ENCODE measurements at regions of chr16 and their contacts with region 1.

Region 1: DNA sequence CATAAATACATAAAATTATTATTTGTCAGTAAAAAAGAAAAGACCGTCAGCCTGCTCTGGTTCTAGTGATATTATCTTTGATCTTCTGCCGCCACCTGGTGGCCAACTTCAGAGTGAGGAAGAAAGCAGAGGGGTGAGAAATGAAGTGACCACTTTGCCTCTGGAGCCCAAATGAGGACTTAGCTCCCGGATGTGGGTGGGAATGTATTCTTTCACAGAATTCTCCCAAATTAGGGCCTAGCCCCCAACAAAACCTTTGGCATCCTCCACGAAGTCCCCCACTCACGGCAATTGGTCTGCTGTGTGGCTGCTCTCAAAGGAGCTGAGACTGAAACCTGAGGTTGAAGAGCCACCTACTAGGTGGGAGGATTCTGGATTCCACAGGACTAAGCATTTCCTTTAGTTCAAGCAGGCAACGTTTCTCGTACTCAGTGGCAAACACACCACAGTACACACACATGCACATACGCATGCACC is 4.9 kb upstream of the ZNF267 start:
- DNase-seq: peak; percentile 74 to 85 (median 78)
- H3K4me3 ChIP-seq: peak overlapping the region; percentile 65 to 67
- H3K4me3 Mint-ChIP-seq: peak overlapping the region; percentile 71 to 84 (median 78)
- H3K27ac ChIP-seq: peak overlapping the region; percentile 71
- H3K27ac Mint-ChIP-seq: peak overlapping the region; percentile 74 to 96 (median 92)
- H3K4me1 ChIP-seq: peaks cover 44% of the 10 kb centered on the region
- H3K4me1 Mint-ChIP-seq: peaks cover 31 to 50% (median 38%) of the 10 kb centered on the region in 4 donors
- H3K27me3 ChIP-seq: no peaks in the 10 kb centered on the region
- H3K27me3 Mint-ChIP-seq: no peaks in the 10 kb centered on the region

Region 2: GRCh38 chr16:30957456-30958174 is 911.1 kb before region 1 on chr16 and contains the start of gene SETD1A:
- CTCF ChIA-PET with region 1: interaction called, 11 read pairs
- POLR2A ChIA-PET with region 1: interaction called, 5 read pairs
- intact Hi-C with region 1: loop called (anchors 10 kb)
- DNase-seq: peak; percentile 97 to 98 (median 98)
- H3K4me3 ChIP-seq: peak within 1 kb of the TSS; percentile 85 to 95
- H3K4me3 Mint-ChIP-seq: peak within 1 kb of the TSS; percentile 95 to 99 (median 96)
- H3K27ac ChIP-seq: peak within 1 kb of the TSS; percentile 92
- H3K27ac Mint-ChIP-seq: peak within 1 kb of the TSS; percentile 98 to 100 (median 99)
- H3K4me1 ChIP-seq: peaks cover 30% of the 10 kb centered on the region
- H3K4me1 Mint-ChIP-seq: peaks cover 13 to 43% (median 31%) of the 10 kb centered on the region in 4 donors
- H3K27me3 ChIP-seq: no peaks in the 10 kb centered on the region
- H3K27me3 Mint-ChIP-seq: peaks cover 0 to 4% of the 10 kb centered on the region in 2 donors
- total RNA-seq, gene SETD1A: 32.1 to 33.2 TPM

Region 3: DNA sequence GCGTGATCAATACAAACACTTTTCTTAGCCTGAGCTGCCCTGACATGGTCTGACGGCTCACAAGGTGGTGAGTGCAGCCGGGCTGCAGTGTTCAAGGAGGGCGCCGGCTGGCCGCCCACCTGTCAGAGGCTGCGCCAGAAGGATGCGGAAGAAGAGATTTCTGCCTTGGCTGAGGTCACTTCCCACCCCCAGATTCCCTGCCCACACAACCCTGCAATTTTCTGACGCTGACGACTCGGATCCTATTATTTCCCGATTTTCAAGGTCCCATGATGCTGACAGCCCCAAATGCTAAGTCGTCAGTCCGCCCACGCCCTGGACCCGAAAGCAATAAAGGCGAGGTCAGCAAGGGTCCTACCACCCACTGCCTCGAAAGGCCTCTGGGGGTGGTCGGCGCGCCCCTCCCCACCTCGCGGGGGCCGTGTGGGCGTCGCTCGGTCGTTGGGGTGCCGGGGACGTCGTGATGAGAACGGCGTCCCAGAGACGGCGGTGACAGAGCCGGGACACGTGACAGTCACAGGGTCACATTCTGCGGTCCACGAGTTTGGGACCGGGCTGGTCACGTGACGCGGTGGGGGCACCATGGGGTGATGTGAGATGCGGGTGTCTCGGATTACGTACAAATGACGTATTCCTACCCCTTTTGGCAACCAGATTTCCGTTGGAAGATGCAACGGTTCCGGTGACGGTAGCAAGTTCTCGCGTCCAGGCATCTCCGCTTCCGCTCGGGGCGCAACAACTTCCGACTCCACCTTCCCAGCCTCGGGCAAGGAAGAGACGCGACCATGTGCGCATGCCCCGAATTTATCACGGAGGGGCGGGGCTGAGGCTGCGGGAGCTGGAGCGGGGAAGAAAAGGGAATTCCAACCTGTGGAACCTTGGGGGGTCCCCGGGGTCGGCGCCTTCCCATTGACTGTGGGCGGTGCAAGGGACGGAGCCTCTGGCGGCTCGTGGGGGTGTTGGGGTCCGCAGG is 835.7 kb before region 1 on chr16 and contains the start of gene STX4:
- CTCF ChIA-PET with region 1: no interaction called
- POLR2A ChIA-PET with region 1: no interaction called
- intact Hi-C with region 1: loop called (anchors 5 kb)
- DNase-seq: peak; percentile 95 to 100 (median 98)
- H3K4me3 ChIP-seq: peak within 1 kb of the TSS; percentile 83 to 97
- H3K4me3 Mint-ChIP-seq: peak within 1 kb of the TSS; percentile 91 to 98 (median 95)
- H3K27ac ChIP-seq: peak within 1 kb of the TSS; percentile 86
- H3K27ac Mint-ChIP-seq: peak within 1 kb of the TSS; percentile 93 to 98 (median 98)
- H3K4me1 ChIP-seq: peaks cover 24% of the 10 kb centered on the region
- H3K4me1 Mint-ChIP-seq: peaks cover 6 to 38% (median 22%) of the 10 kb centered on the region in 4 donors
- H3K27me3 ChIP-seq: no peaks in the 10 kb centered on the region
- H3K27me3 Mint-ChIP-seq: no peaks in the 10 kb centered on the region
- total RNA-seq, gene STX4: 106 to 111 TPM

Region 4: DNA sequence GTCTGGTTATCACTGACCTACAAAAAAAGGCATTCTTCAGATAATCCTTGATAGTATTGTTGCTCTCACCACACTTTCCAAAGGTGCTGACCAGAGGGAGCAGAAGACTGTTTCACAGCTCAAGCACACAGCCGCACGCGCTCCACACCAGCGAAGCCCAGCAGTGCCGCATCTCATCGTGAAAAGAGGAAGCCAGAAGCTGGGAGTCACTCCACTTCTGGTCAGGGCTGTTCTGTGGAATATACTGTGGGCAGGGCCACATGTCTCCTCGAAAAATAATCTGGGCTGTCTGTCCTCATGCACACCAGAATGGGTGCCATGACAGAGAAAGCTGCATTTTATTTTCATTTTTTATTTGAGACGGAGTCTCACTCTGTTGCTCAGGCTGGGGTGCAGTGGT is 711.6 kb before region 1 on chr16:
- CTCF ChIA-PET with region 1: no interaction called
- POLR2A ChIA-PET with region 1: no interaction called
- intact Hi-C with region 1: loop called (anchors 5 kb)
- DNase-seq: no peak
- H3K4me3 ChIP-seq: no peak overlapping the region
- H3K4me3 Mint-ChIP-seq: peak overlapping the region in 2 of 8 donors; percentile 8 to 43
- H3K27ac ChIP-seq: no peak overlapping the region
- H3K27ac Mint-ChIP-seq: peak overlapping the region in 2 of 7 donors; percentile 31 to 55
- H3K4me1 ChIP-seq: no peaks in the 10 kb centered on the region
- H3K4me1 Mint-ChIP-seq: peaks cover 0 to 8% (median 3%) of the 10 kb centered on the region in 4 donors
- H3K27me3 ChIP-seq: no peaks in the 10 kb centered on the region
- H3K27me3 Mint-ChIP-seq: peaks cover 0 to 2% of the 10 kb centered on the region in 2 donors

Region 5: GRCh38 chr16:31507929-31508705 is 360.6 kb before region 1 on chr16 and contains the start of gene RUSF1:
- CTCF ChIA-PET with region 1: interaction called, 5 read pairs
- POLR2A ChIA-PET with region 1: interaction called, 9 read pairs
- intact Hi-C with region 1: loop called (anchors 5 kb)
- DNase-seq: peak; percentile 74 to 82 (median 77)
- H3K4me3 ChIP-seq: peak within 1 kb of the TSS; percentile 92 to 94
- H3K4me3 Mint-ChIP-seq: peak within 1 kb of the TSS; percentile 87 to 97 (median 93)
- H3K27ac ChIP-seq: peak within 1 kb of the TSS; percentile 83
- H3K27ac Mint-ChIP-seq: peak within 1 kb of the TSS; percentile 91 to 98 (median 97)
- H3K4me1 ChIP-seq: peaks cover 36% of the 10 kb centered on the region
- H3K4me1 Mint-ChIP-seq: peaks cover 22 to 59% (median 45%) of the 10 kb centered on the region in 4 donors
- H3K27me3 ChIP-seq: no peaks in the 10 kb centered on the region
- H3K27me3 Mint-ChIP-seq: no peaks in the 10 kb centered on the region
- total RNA-seq, gene RUSF1: 101 to 110 TPM

Region 6: DNA sequence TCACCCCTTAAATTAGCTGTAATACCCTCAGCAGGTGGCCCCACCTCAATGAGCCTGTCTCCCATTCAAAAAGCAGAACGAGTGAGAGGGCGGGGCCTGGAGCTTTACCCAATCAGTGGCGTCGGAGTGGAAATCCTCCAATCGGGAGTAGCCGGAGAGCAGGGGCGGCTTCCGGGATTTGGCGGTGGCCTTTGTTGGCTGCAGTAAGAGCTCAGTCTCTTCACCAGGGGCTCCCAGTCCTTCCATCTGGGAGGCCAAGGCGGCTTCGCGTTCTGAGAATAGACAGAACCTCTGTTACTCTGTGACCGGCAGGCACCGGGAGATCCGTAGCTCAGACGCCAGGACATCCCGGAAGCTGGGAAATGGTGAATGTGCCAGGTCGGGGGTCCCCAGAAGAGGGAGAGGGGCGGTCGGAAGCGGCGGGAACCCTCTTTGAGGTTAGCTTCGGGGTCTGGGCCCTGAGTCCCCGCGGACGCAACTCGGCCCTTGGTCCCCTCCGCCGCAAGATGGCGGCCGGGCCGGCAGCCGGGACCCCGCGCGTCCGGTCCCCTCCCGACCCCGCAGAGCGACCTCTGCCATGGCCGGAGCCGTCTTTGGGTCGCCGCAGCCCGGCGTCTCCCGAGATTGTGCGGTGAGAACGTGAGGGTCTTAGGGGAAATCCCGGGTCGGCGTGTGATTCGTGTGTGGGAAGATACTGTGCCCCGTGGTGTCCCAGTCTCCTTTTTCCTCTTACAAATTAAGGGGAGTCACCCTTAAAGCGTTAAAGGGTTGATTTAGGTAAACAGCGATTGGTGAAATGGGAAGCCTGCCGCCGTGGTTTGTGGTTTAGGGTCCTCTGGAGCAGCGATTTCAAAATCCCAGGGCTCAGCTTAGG is 155.4 kb before region 1 on chr16:
- CTCF ChIA-PET with region 1: interaction called, 13 read pairs
- POLR2A ChIA-PET with region 1: interaction called, 14 read pairs
- intact Hi-C with region 1: loop called (anchors 2 kb)
- DNase-seq: peak; percentile 87 to 94 (median 88)
- H3K4me3 ChIP-seq: peak overlapping the region; percentile 64 to 87
- H3K4me3 Mint-ChIP-seq: peak overlapping the region; percentile 99 to 100 (median 100)
- H3K27ac ChIP-seq: peak overlapping the region; percentile 91
- H3K27ac Mint-ChIP-seq: peak overlapping the region; percentile 95 to 99 (median 99)
- H3K4me1 ChIP-seq: peaks cover 33% of the 10 kb centered on the region
- H3K4me1 Mint-ChIP-seq: peaks cover 30 to 62% (median 54%) of the 10 kb centered on the region in 4 donors
- H3K27me3 ChIP-seq: no peaks in the 10 kb centered on the region
- H3K27me3 Mint-ChIP-seq: no peaks in the 10 kb centered on the region

Measured in CD4-positive, alpha-beta memory T cell (primary cell).